GM13977 (cell line): ENCODE measurements at regions of chr18 and their contacts with region 1.

Region 1: DNA sequence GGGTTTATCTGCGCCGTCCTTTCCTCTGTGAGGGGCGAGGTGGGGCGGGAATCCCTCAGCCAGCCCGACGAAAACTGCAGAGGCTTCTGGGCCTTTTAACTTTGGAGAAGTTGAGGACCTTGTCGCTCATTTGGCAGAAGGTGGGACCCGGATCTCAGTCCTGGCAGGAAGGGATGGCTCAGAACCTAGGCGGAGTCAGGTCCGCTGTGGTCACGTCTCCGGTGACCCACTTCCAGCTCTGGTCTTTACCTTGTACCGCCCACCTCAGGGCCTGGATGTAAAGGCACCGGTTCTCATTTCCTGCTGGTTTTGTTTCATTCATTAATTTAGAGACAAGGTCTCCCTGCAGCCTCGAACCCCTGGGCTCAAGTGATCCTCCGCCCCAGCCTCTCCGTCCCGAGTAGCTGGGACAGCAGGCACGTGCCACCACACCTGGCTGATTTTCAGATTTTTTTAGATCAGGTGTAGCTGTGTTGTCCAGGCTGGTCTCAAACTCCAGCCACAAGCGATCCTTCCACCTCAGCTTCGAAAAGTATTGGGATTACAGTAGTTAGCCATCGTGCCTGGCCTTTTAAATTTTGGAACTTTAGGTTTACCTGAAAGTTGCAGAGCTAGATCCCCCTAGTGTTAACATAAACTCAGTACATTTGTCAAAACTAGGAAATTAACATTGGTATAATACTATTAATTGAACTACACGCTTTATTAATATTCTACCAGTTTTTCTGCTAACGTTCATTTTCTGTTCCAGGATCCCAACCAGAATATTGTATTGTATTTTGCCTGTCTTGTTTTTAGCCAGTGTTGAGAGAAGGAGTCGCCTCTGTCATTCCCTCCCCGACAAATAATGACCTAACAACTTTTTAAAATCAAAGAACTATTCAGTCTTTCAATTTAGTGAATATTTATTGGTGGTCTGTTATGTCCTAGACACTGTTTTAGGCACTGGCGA is 852 bp downstream of the POLI start:
- DNase-seq: peak; percentile 30
- CTCF ChIP-seq: peak; percentile 41

Region 2: DNA sequence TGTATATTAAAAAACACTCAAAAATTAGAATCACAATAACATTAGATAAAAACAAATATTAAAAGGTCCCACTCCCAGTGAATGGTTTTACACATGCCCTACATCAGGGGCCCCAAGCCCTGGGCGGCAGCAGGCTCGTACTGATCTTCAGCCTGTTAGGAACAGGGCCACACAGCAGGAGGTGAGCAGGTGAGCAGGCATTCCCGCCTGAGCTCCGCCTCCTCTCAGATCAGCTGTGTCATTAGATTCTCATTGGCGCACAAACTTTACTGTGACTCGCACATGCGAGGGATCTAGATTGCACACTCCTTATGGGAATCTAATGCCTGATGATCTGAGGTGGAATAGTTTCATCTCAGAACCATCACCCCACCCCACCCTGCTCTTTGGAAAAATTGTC is 119.9 kb before region 1 on chr18:
- in situ Hi-C with region 1: loop called (anchors 10 kb)
- DNase-seq: no peak
- CTCF ChIP-seq: no peak

Region 3: DNA sequence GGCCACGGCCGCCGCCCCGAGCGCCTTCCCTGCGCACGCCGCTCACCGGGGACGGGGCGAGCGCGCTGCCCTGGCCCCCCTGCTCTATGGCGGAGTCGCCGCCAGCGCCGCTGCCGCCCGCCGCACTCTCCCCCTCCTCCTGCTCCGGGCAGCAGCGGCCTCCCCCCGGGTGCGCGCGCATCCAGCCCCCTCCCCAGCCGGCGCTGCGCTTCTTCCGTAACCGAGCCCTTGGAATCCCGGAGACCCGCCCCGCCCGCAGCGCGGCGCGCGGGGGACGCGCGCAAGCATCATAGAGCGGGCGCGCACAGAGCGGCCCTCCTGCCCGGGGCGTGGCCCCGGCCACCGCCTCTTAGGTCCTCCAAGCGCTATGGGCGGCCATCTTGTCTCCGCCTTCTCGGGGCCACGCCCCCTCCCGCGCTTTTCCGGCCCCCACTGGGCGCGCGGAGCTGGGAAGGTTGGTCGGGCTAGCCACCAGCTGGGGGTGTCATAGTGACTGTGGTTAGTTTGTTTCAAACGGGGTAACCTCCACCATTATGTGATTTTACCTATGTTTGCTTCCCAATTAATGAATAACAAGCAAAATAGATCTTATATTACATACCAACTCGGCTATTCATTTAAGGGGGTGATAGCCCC is 45.7 kb before region 1 on chr18 and contains the start of gene MBD2:
- in situ Hi-C with region 1: loop called (anchors 5 kb)
- DNase-seq: peak; percentile 90
- CTCF ChIP-seq: peak; percentile 48

Region 4: GRCh38 chr18:55322178-55322735 is 1052.1 kb after region 1 on chr18:
- in situ Hi-C with region 1: loop called (anchors 25 kb)
- DNase-seq: peak; percentile 62
- CTCF ChIP-seq: no peak